Sciatic nerve (tissue), 2 donors: ENCODE measurements at regions of chr15 and their contacts with region 1.

Region 1: GRCh38 chr15:93997084-93997918 is 234.1 kb upstream of the MCTP2 start:
- DNase-seq: no peak
- ATAC-seq: no peak

Region 2: DNA sequence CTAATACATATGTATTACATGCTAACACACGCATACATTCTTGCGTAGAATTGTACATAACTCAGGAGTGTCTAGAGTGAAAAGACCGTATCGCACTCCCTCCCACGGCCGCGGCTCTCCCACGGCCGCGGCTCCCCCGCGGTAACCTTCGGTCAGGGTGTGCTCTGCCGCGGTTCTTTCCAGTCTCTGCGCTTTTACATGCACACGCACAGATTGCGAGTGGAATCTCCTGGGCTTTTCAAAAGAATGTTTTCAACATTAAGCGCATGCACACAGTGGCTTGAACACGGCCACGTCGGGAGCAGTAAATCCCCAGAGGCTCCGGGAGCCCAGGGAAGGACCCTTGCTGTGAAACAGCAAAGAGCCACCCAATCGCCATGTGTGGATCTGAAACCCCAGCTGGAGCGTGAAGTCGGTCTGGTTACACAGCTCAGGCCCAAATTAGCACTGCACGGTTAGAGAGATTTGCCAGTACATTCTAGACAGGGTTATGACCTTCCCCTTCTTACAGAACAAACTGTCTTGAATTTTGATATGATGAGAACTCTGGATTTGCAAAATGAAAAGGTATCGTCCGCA is 907.5 kb before region 1 on chr15:
- intact Hi-C with region 1: loop called (anchors 10 kb)
- DNase-seq: no peak
- ATAC-seq: peak; percentile 73

Region 3: GRCh38 chr15:94125156-94125555 is 127.9 kb after region 1 on chr15:
- intact Hi-C with region 1: loop called (anchors 5 kb)
- DNase-seq: no peak
- ATAC-seq: peak; percentile 64